ENCODE measurements at regions of chr12 and their contacts with region 1.

Region 1: DNA sequence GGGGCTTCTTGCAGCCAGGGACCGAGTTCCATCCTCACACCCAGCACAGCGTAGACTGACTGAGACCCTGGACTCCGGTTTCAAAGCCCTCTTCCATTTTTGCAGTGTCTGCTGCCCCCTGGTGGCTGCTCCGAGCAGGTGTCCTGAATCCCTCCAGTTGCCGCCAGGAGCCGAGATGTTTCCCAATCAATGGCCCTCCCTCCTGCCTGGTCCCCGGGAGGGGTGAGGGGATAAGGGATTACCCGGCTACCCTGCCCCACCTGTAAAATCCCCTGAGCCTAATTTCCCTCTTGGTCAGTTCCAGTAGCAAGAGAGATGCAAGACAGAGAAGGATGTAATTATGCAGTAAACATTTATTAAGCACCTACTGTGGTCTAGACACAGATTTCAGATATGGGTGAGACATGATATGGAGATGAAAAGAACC is 55.0 kb downstream of the PHETA1 start:
- DNase-seq: peak; percentile 45
- ATAC-seq: peak; percentile 86
- H3K4me3 ChIP-seq: peak overlapping the region in 1 of 2 experiments; percentile 13; a peak in 1 of 4 replicates
- H3K27ac ChIP-seq: no peak overlapping the region
- H3K4me1 ChIP-seq: peaks cover 2% of the 10 kb centered on the region; the same call in 1 of the 2 replicates
- H3K27me3 ChIP-seq: no peaks in the 10 kb centered on the region
- CTCF ChIP-seq: peak; percentile 96

Region 2: GRCh38 chr12:110893956-110894355 is 419.9 kb before region 1 on chr12:
- CTCF ChIA-PET with region 1: interaction called, 5 read pairs
- POLR2A ChIA-PET with region 1: interaction called, 3 read pairs
- in situ Hi-C with region 1: no loop called
- intact Hi-C with region 1: loop called (anchors 2 kb)
- DNase-seq: no peak
- ATAC-seq: no peak
- H3K4me3 ChIP-seq: no peak overlapping the region
- H3K27ac ChIP-seq: no peak overlapping the region
- H3K4me1 ChIP-seq: no peaks in the 10 kb centered on the region
- H3K27me3 ChIP-seq: no peaks in the 10 kb centered on the region
- CTCF ChIP-seq: no peak